ENCODE measurements at regions of chr19 and their contacts with region 1.

Region 1: DNA sequence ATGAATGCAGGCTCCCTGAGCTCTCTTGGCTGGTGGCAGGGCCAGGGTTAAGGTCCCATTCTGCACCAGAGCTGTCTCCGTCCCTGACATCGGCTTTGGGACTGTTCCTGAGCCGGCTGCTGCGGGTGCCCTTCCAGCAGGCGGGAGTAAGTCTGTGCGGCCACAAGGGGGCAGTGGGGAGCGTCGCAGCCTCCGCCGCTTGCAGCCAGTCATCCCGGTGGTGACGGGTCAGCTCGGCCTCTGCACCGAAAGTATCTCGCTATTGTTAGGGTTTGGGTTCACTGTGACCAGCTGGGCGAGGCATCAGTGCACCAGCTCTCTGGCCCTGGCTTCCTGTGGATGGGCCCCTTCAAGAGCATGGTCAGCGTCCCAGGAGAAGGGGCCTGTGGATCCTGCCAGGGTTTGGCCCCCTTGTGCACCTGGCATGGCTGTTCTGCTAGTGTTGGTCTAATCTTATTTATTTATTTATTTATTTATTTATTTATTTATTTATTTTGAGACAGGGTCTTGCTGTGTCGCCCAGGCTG is 15.1 kb downstream of the NDUFB7 start:
- DNase-seq: peak; percentile 85
- H3K4me3 Mint-ChIP-seq: no peak overlapping the region
- H3K27ac Mint-ChIP-seq: no peak overlapping the region
- H3K4me1 Mint-ChIP-seq: peaks cover 44% of the 10 kb centered on the region
- H3K27me3 Mint-ChIP-seq: no peaks in the 10 kb centered on the region

Region 2: GRCh38 chr19:14505488-14506432 is 51.0 kb before region 1 on chr19:
- CTCF ChIA-PET with region 1: interaction called, 20 read pairs
- POLR2A ChIA-PET with region 1: interaction called, 3 read pairs
- intact Hi-C with region 1: no loop called
- DNase-seq: peak; percentile 85
- H3K4me3 Mint-ChIP-seq: no peak overlapping the region
- H3K27ac Mint-ChIP-seq: peak overlapping the region; percentile 74
- H3K4me1 Mint-ChIP-seq: peaks cover 40% of the 10 kb centered on the region
- H3K27me3 Mint-ChIP-seq: no peaks in the 10 kb centered on the region

Region 3: GRCh38 chr19:14529254-14530004 is 27.3 kb before region 1 on chr19 and contains the start of gene TECR:
- CTCF ChIA-PET with region 1: interaction called, 11 read pairs
- POLR2A ChIA-PET with region 1: no interaction called
- intact Hi-C with region 1: loop called (anchors 2 kb)
- DNase-seq: peak; percentile 100
- H3K4me3 Mint-ChIP-seq: peak within 1 kb of the TSS; percentile 98
- H3K27ac Mint-ChIP-seq: peak within 1 kb of the TSS; percentile 95
- H3K4me1 Mint-ChIP-seq: peaks cover 33% of the 10 kb centered on the region
- H3K27me3 Mint-ChIP-seq: no peaks in the 10 kb centered on the region
- total RNA-seq, gene TECR: 120 TPM

Region 4: DNA sequence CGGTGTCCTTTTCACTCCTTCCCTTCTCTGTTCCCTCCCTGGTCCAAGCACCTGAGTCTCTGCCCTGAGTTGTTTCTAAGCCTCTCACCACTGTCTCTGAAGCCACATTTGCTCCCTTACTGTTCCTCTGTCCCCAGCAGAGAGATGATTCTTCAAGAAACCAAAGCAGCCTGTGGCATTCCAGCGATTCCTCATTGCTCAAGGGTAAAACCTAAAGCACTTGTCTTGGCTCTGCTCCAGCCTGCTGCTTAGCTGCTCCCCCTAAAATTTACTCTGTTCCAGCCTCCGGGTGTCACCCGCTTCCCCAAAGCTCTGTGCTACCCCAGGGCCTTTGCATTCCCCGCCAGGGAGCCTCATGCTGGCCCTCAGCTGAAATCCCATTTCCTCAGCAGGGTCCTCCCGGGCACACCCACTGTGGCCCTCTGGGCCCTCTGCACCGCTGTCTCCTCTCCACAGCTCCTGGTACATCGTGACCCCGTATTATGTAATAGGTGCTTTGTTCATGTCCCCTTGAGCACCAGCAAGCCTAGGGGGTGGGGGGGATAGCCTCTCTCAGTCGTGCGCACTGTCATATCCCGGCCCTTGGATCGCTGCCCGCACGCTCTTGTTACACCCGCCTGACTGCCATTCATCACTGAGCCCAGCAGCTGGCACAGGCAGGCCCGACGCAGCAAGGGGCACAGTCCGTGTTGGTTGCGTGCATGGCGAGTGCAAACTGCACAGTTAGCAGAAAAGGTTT is 11.6 kb before region 1 on chr19:
- CTCF ChIA-PET with region 1: interaction called, 21 read pairs
- POLR2A ChIA-PET with region 1: no interaction called
- intact Hi-C with region 1: no loop called
- DNase-seq: no peak
- H3K4me3 Mint-ChIP-seq: no peak overlapping the region
- H3K27ac Mint-ChIP-seq: peak overlapping the region; percentile 33
- H3K4me1 Mint-ChIP-seq: peaks cover 17% of the 10 kb centered on the region
- H3K27me3 Mint-ChIP-seq: no peaks in the 10 kb centered on the region

Region 5: DNA sequence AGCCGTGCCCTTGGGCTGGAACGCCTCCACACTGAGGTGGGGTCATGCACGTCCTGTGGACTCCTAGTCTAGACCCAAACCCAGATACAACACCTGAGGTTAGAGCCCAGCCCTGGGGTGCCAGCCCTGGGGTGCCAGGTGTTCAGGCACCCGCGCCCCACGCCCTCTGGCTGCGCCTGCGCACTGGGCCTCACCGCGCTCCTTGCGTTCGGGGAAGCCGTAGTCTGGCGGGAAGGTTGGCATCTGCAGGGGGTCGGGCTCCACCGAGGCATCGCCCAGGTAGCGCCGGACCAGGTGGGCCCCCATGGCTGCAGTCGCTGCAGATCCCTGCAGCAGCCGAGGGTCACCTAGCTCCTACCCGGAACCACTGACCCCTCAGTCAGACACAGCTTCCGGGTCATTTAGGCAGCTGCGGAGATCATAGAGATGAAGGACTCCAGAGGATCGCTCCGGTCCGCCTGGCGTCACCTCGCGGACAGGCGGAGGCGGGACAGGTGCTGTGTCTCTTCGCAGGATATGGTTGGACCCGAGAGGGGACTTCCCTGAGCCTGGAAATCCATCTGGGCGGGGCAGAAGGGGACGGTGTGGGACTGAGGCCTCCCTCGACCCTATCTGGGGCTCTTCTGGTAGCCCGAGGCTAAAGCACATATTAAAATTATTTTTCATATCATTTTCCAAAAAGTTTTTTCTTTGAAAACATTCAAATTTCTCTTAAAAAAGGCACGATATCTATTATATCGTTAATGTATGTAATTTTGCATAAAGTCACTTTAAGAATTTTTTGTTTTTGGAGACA is 15.2 kb after region 1 on chr19 and contains the start of gene NDUFB7:
- CTCF ChIA-PET with region 1: interaction called, 43 read pairs
- POLR2A ChIA-PET with region 1: interaction called, 7 read pairs
- intact Hi-C with region 1: no loop called
- DNase-seq: peak; percentile 95
- H3K4me3 Mint-ChIP-seq: peak within 1 kb of the TSS; percentile 98
- H3K27ac Mint-ChIP-seq: peak within 1 kb of the TSS; percentile 85
- H3K4me1 Mint-ChIP-seq: peaks cover 33% of the 10 kb centered on the region
- H3K27me3 Mint-ChIP-seq: no peaks in the 10 kb centered on the region
- total RNA-seq, gene NDUFB7: 118 to 130 TPM

Region 6: GRCh38 chr19:14689598-14690503 is 133.1 kb after region 1 on chr19 and contains the start of gene ZNF333:
- CTCF ChIA-PET with region 1: interaction called, 48 read pairs
- POLR2A ChIA-PET with region 1: no interaction called
- intact Hi-C with region 1: no loop called
- DNase-seq: peak; percentile 100
- H3K4me3 Mint-ChIP-seq: peak within 1 kb of the TSS; percentile 83
- H3K27ac Mint-ChIP-seq: peak within 1 kb of the TSS; percentile 97
- H3K4me1 Mint-ChIP-seq: peaks cover 20% of the 10 kb centered on the region
- H3K27me3 Mint-ChIP-seq: no peaks in the 10 kb centered on the region
- total RNA-seq, gene ZNF333: 16.7 to 18.0 TPM

Region 7: DNA sequence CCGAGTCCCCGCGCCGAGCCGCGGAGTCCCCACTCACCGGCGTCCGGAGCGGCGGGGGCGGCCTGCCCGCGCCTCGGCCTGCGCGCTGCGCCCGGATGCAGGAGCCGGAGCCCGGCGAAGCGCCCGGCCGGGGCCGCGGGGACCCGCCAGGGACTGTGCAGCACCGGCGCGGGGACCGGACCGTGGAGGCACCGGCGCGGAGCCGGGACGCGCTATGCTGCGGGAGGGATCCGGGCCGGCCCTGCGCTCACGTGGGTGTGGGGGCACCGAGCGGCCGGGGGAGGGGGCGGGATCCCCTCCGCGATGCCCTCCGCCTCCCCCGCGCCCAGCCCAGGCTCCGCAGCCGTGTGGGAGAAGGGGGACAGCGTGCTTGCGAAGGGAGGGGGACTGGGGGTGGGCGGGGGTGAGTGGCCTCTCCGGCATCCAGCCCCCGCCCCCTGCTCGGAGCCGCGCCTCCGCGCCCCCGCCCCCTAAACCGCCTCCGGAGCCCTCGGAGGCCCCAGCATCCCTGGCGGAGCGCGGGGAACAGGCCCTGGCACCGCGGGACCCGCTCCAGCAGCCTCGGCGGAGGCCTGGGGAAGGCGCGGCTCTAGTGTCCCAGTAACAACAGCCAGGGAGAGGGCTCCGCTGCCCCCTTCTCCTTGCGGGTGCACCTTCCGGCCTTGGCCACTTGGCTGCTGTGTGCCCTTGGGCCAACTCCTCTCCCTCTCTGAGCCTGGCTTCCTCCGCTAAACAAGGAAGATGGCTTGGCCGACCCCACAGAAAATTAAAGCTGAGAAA is 422.9 kb after region 1 on chr19 and contains the start of gene SLC1A6:
- CTCF ChIA-PET with region 1: no interaction called
- POLR2A ChIA-PET with region 1: no interaction called
- intact Hi-C with region 1: no loop called
- DNase-seq: no peak
- H3K4me3 Mint-ChIP-seq: no peak within 1 kb of the TSS
- H3K27ac Mint-ChIP-seq: no peak within 1 kb of the TSS
- H3K4me1 Mint-ChIP-seq: peaks cover 2% of the 10 kb centered on the region
- H3K27me3 Mint-ChIP-seq: peaks cover 42% of the 10 kb centered on the region
- total RNA-seq, gene SLC1A6: not detected

Measured in activated CD4-positive, alpha-beta memory T cell treated with anti-CD3 and anti-CD28 coated beads for 36 hours (primary cell).